Activated CD4-positive, alpha-beta memory T cell treated with anti-CD3 and anti-CD28 coated beads for 36 hours (primary cell): ENCODE measurements at regions of chr1 and their contacts with region 1.

Region 1: DNA sequence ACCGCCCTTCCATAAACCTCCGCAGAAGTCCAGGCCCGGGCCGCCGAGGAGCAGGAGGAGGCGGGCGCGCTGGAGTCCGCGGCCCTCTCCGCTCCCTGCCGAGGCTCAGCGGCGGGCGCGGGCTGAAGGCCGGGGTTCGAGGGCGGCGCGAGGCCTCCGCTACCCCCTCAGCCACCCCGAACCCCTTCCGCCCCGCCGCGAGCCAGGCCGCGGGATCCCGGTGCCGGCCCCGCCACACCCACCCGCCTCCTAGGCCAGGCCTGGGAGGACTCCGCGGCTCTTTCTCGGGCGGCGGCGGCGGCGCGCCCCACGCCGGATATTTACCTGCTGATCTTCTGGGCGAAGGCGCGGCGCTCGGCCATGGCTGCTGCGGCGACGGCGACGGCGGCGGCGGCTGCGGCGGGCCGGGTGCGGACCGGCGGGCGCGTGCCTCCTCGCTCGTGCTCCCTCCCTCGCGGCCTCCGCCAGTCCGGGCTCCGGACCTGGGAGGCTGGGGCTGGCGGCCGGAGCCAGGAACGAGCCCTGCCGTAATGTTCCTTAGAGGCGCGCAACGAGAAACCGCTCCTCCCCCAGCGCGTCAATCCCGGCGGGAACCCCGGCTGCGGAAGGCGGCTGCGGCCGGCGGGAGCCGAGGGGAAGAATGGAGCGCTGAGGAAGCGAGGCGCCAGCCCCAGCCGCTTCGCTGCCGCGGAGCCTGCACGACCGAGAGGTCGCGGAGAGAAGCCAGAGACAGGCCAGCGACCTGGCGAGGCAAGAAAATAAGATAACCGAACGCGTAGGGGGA is at the start of gene DOCK7:
- DNase-seq: peak; percentile 61
- H3K4me3 Mint-ChIP-seq: peak within 1 kb of the TSS; percentile 85
- H3K27ac Mint-ChIP-seq: peak within 1 kb of the TSS; percentile 73
- H3K4me1 Mint-ChIP-seq: peaks cover 34% of the 10 kb centered on the region
- H3K27me3 Mint-ChIP-seq: no peaks in the 10 kb centered on the region
- total RNA-seq, gene DOCK7: 15.5 to 20.4 TPM

Region 2: DNA sequence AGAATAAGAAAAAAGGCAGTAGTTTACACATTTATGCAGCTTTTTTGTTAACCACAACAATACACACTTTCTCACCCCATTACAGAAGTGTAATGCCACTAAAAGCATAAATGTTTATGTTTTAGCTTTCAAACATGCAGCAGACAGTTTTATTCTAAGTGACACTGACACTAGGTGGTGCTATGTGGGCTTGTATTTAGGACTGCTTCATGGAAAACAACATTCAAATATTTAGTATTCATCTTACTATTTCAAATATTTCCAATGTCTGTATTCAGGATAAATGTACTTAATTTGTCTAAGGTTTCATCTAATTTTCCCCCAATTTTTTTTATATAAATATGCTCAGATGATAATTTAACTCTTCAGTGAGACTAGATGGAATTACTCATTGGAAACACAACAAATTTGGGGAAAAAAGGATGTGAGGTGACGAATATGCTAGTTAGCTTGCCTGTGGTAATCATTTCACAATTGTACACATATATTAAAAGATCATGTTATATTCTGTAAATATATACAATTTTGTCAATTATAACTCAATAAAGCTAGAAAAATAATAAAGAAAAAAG is 179.8 kb before region 1 on chr1:
- CTCF ChIA-PET with region 1: no interaction called
- POLR2A ChIA-PET with region 1: no interaction called
- intact Hi-C with region 1: no loop called
- DNase-seq: no peak
- H3K4me3 Mint-ChIP-seq: no peak overlapping the region
- H3K27ac Mint-ChIP-seq: no peak overlapping the region
- H3K4me1 Mint-ChIP-seq: no peaks in the 10 kb centered on the region
- H3K27me3 Mint-ChIP-seq: no peaks in the 10 kb centered on the region

Region 3: GRCh38 chr1:62625415-62625814 is 62.7 kb before region 1 on chr1:
- CTCF ChIA-PET with region 1: no interaction called
- POLR2A ChIA-PET with region 1: no interaction called
- intact Hi-C with region 1: loop called (anchors 2 kb)
- DNase-seq: no peak
- H3K4me3 Mint-ChIP-seq: no peak overlapping the region
- H3K27ac Mint-ChIP-seq: no peak overlapping the region
- H3K4me1 Mint-ChIP-seq: peaks cover 9% of the 10 kb centered on the region
- H3K27me3 Mint-ChIP-seq: no peaks in the 10 kb centered on the region